H1 (cell line): ENCODE measurements at regions of chr11 and their contacts with region 1.

Region 1: GRCh38 chr11:57249384-57250319 is 12.6 kb upstream of the APLNR start:
- DNase-seq: peak in 1 of 2 experiments; percentile 87
- H3K4me3 ChIP-seq: no peak overlapping the region
- H3K27ac ChIP-seq: no peak overlapping the region
- H3K4me1 ChIP-seq: peaks cover 0 to 2% (median 0%) of the 10 kb centered on the region in 4 experiments; a peak in 1 of 7 replicates
- H3K27me3 ChIP-seq: no peaks in the 10 kb centered on the region
- CTCF ChIP-seq: peak; percentile 78 to 86 (median 84)
- EP300 ChIP-seq: no peak
- POLR2A ChIP-seq: no peak
- RAD21 ChIP-seq: peak; percentile 91 to 97

Region 2: DNA sequence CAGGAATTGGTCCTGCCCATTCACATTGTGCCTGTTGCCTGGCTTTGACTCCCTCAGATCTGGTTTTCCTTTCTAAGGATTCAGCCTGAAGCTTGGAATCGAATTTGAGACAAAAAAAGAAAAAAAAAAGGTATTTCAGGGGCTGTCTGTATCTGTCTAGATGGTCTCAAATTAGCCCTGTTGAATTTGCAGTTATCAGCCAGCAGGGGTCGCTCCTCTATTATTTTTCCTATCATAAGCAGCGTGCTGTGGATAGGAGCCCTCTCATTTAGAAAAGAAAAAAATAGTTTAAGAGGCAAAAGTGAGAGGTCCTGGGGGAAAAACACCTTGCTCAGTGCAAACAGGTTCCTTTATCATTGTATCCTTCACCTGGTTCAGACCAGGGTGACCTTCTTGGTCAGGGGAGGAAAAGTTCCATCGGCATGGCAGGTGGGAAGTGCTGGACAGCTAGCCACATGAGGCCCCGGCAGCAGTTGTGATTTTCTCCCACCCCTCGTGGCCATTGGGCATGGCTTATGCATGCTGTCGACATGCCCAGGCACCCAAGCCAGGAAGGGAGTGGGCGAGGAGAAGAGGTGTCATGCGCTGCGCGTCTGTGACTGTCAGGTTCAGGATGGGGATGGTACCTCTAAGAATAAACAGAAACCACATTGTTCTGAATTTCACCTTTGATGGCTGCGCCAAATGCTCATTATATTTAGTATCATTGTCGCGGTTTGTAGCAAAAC is 247.8 kb before region 1 on chr11:
- CTCF ChIA-PET with region 1: interaction called, 10 read pairs
- POLR2A ChIA-PET with region 1: no interaction called
- DNase-seq: no peak
- H3K4me3 ChIP-seq: no peak overlapping the region
- H3K27ac ChIP-seq: no peak overlapping the region
- H3K4me1 ChIP-seq: no peaks in the 10 kb centered on the region
- H3K27me3 ChIP-seq: no peaks in the 10 kb centered on the region
- CTCF ChIP-seq: peak in 1 of 3 experiments; percentile 17; a peak in 1 of 4 replicates
- EP300 ChIP-seq: no peak
- POLR2A ChIP-seq: no peak
- RAD21 ChIP-seq: peak; percentile 38 to 43; a peak in 2 of 4 replicates

Region 3: GRCh38 chr11:57116654-57117053 is 133.0 kb before region 1 on chr11:
- CTCF ChIA-PET with region 1: interaction called, 942 read pairs
- POLR2A ChIA-PET with region 1: no interaction called
- DNase-seq: peak; percentile 13 to 52
- H3K4me3 ChIP-seq: no peak overlapping the region
- H3K27ac ChIP-seq: no peak overlapping the region
- H3K4me1 ChIP-seq: peaks cover 0 to 2% (median 0%) of the 10 kb centered on the region in 4 experiments; a peak in 2 of 7 replicates
- H3K27me3 ChIP-seq: no peaks in the 10 kb centered on the region; a peak in 1 of 7 replicates
- CTCF ChIP-seq: peak; percentile 43 to 67 (median 64)
- EP300 ChIP-seq: no peak
- POLR2A ChIP-seq: no peak
- RAD21 ChIP-seq: peak; percentile 82 to 84

Region 4: DNA sequence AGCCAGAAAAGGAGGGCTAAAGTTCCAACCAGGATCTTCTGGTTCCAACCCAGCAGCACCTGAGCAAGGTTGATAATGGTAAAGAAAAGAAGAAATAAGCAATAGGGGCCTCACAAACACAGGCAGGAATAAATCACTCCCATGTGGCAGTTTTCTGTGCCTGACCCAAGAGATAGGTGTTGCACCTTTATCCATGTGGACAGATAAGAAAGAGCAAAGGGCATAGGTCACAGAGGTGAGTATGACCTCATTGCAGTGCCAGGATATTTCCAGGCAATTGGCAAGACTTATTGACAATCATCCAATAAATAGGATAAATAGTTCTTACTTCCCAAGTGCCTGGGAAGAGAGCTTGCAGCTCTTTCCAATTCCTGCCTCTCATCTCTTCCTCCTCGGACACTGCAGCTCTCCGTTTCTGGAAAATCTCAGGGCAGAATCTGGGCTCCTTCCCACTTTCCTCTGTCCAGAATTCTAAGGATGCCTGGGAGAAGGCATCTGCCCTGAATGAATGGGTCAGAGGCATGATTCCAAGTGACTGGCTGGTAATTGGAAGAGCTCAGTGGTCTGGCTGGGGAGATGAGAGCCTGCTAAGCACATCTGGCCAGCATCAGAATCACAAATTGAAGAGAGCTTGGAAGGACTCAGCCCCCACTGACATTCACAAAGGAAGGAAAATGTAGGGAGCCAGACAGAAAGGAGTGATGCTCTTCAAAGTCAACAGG is 82.4 kb before region 1 on chr11:
- CTCF ChIA-PET with region 1: interaction called, 26 read pairs
- POLR2A ChIA-PET with region 1: no interaction called
- DNase-seq: no peak
- H3K4me3 ChIP-seq: no peak overlapping the region
- H3K27ac ChIP-seq: no peak overlapping the region
- H3K4me1 ChIP-seq: no peaks in the 10 kb centered on the region
- H3K27me3 ChIP-seq: peaks cover 0 to 1% (median 0%) of the 10 kb centered on the region in 4 experiments; a peak in 1 of 7 replicates
- CTCF ChIP-seq: no peak
- EP300 ChIP-seq: no peak
- POLR2A ChIP-seq: no peak
- RAD21 ChIP-seq: no peak

Region 5: DNA sequence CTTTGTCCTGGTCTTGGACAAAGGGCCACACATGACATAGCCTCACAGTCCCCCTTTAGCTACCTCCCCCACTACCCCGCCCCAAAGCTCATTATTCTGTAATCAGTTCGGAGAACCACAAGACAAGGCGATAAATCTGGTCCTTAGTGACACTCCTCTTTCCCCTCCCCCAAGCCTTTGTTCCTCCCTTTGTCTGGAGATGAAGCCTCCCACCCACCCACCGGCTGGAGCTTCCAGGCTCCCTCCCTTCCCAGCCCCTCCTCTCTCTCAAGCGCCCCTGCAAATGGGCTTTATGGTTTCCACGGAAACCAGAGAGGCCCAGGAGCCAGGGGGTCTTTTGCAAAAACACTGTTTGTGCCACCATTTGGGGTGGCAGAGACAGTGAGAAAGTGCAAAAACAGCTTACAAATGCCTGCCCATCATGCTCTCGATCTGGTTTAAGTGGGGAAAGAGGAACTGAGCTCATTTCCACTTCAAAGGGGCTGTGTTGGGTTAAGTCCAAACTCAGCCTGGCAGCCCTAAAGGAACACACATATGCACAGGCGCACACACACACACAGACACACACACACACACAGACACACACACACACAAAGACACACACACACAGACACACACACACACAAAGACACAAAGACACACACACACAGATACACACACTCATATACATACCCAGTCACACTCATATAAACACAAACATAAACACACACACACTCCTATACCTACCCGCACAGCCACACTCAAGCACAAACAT is 36.1 kb before region 1 on chr11:
- CTCF ChIA-PET with region 1: interaction called, 37 read pairs
- POLR2A ChIA-PET with region 1: no interaction called
- DNase-seq: peak in 1 of 2 experiments; percentile 65
- H3K4me3 ChIP-seq: peak overlapping the region in 3 of 4 experiments; percentile 15 to 42 (median 19); a peak in 4 of 8 replicates
- H3K27ac ChIP-seq: 0 out of 2 replicates have a peak overlapping the region, but pooled peaks have one; percentile 23
- H3K4me1 ChIP-seq: peaks cover 4 to 14% (median 11%) of the 10 kb centered on the region in 4 experiments; a peak in 6 of 7 replicates
- H3K27me3 ChIP-seq: no peaks in the 10 kb centered on the region
- CTCF ChIP-seq: no peak
- EP300 ChIP-seq: no peak
- POLR2A ChIP-seq: no peak
- RAD21 ChIP-seq: no peak

Region 6: GRCh38 chr11:57269571-57270021 is 19.9 kb after region 1 on chr11:
- CTCF ChIA-PET with region 1: interaction called, 41 read pairs
- POLR2A ChIA-PET with region 1: no interaction called
- DNase-seq: no peak
- H3K4me3 ChIP-seq: no peak overlapping the region
- H3K27ac ChIP-seq: no peak overlapping the region
- H3K4me1 ChIP-seq: no peaks in the 10 kb centered on the region
- H3K27me3 ChIP-seq: no peaks in the 10 kb centered on the region
- CTCF ChIP-seq: no peak
- EP300 ChIP-seq: no peak
- POLR2A ChIP-seq: no peak
- RAD21 ChIP-seq: no peak

Region 7: GRCh38 chr11:57332694-57333440 is 83.2 kb after region 1 on chr11:
- CTCF ChIA-PET with region 1: no interaction called
- POLR2A ChIA-PET with region 1: no interaction called
- DNase-seq: no peak
- H3K4me3 ChIP-seq: no peak overlapping the region
- H3K27ac ChIP-seq: no peak overlapping the region
- H3K4me1 ChIP-seq: peaks cover 3 to 8% (median 3%) of the 10 kb centered on the region in 4 experiments; a peak in 6 of 7 replicates
- H3K27me3 ChIP-seq: no peaks in the 10 kb centered on the region
- CTCF ChIP-seq: no peak
- EP300 ChIP-seq: no peak
- POLR2A ChIP-seq: no peak
- RAD21 ChIP-seq: no peak